ENCODE measurements at regions of chr5 and their contacts with region 1.

Region 1: DNA sequence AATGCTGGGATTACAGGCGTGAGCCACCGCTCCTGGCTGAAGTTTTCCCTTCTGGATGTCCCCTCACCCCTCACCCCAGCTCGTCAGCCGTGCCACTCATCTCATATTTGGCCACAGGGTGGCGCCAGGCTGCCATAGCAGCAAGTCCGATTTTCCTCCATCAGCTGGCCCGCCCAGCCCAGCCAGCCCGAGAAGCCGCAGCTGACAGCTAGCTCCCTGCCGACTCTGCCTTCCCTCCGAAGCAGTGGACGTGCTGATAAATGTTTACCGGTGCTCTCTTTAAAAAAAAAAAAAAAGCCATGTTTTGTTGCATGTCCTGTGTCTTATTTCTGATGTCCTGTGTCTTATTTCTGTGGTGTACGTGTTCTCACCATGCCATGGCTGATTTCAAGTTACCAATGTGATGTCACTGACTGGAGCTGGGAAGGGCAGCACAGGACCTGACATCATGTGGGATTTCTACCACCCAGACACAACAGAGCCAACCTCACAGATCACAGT is 58.3 kb downstream of the PFDN1 start:
- DNase-seq: peak; percentile 83
- CTCF ChIP-seq: peak; percentile 92

Region 2: DNA sequence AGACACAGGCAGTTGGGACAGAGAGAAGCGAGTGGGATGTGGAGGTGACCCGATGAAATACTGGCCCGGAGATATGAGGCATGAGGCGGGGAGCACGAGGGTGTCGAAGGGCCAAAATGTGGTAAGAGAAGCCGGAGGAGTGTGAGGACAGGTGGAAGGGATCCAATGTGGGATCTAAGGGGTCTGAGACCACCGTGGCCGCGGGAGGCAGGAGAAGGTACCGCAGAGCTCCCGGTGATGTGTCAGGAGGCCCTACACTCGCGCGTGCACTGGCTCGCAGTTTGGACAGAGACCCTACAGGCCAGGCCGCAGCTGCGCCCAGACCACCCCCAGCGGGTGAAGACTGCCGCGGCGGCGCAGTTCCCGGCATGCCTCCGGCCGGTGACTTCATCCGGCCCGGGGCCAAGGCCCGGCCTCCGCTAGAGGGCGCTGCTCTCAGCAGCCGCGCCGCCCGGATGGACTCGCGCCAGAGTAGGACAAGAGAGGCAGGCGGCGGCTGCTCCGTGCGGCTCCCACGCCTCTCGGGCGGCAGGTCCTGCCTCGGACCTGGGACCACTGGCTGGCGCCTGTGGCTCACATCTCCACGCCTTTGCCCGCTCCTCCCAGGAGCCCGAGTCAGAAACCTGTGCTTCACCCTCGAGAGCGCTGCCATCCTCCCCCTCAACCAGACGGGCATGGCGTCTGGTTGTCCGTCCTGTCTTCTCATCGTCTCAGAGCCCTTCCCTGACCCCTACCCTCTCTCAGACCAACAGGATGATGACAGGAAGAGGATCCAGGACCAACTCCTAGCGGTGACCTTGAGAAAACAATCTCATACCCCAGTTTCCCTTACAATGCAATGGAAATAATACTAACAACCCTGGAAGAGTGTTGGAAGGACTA is 726.7 kb before region 1 on chr5:
- CTCF ChIA-PET with region 1: no interaction called
- POLR2A ChIA-PET with region 1: no interaction called
- DNase-seq: peak; percentile 95
- CTCF ChIP-seq: peak; percentile 97

Region 3: GRCh38 chr5:140220032-140220697 is 24.4 kb before region 1 on chr5:
- CTCF ChIA-PET with region 1: interaction called, 12 read pairs
- POLR2A ChIA-PET with region 1: no interaction called
- DNase-seq: peak; percentile 32
- CTCF ChIP-seq: no peak

Region 4: DNA sequence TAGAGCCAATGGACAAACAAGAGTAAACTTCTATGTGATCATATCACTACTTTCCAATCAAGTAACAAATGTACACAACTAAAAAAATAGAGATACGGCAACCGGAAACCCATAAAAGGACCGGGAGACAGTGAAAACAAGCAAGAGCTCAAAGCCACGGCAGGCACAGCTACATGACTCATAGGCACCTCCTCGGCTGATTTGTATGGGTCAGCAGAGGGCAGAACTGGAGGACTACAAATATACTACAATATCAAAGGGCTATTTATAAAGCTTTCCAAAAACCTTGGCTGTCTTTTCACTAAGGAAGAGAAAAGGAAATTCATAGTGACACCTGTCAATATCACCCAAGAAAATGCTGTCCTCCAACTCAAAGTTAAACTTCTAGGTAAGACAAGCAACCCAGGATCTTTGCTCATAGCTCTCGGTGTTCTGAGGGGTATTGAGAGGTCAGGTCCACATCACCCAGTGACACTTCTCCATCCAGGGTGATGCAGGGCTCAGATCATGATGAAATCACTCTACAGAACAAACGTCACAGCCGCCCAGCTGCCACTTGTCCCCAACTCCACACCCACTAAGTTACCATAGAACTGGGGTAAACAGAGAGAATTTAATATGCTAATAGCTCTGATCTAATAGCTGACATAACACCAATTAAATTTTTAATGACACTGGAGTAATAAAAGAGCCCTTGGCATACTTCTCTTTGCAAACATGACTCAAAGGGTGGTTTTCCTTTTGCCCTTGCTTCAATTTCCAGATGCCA is 17.0 kb after region 1 on chr5:
- CTCF ChIA-PET with region 1: interaction called, 99 read pairs
- POLR2A ChIA-PET with region 1: no interaction called
- DNase-seq: peak; percentile 34
- CTCF ChIP-seq: no peak

Region 5: GRCh38 chr5:140327589-140327988 is 83.0 kb after region 1 on chr5:
- CTCF ChIA-PET with region 1: interaction called, 12 read pairs
- POLR2A ChIA-PET with region 1: no interaction called
- DNase-seq: no peak
- CTCF ChIP-seq: no peak

Region 6: DNA sequence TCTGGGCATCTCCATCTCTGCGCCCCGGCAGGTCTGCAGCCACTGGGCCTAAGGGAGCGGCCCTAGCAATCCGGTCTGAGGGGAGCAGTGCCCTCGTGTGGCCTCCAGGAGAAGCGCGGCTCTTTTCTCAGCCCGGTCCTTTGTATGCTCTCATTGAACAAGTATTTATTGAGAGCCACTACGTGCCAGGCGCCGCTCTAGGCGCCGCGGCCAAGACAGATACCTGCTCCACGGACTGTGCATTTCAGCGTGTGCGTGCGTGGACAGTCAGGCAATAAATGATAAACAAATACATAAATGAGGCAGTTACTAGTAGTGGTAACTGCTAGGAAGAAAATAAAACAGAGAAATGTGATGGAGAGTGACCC is 113.1 kb after region 1 on chr5:
- CTCF ChIA-PET with region 1: interaction called, 462 read pairs
- POLR2A ChIA-PET with region 1: no interaction called
- DNase-seq: peak; percentile 90
- CTCF ChIP-seq: peak; percentile 92

Region 7: DNA sequence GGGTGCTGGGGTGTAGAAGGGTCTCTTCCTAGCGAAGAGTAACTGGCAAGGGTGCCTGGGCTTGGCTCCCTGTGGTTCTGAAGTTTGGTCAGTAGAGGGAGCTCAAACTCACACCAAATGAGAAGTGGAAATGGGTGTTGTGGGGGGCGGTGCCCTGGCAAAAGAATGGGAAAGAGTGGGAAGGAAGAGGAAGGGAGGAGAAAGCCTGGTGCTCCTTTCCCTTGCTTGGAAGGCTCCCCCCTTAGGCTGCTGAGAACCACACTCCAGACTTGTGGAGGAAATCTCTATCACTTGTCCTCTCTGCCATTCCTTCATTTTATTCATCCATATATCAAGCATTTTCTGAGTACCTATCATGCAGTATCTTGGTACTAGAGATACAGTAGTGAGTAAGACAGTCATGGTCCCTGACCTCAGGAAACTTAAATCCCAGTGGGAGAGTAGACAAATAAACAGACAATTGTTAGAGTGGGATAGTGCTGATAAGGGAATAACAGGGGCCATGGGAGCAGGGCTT is 128.5 kb after region 1 on chr5:
- CTCF ChIA-PET with region 1: interaction called, 18 read pairs
- POLR2A ChIA-PET with region 1: no interaction called
- DNase-seq: peak; percentile 62
- CTCF ChIP-seq: peak; percentile 84